CD8-positive, alpha-beta T cell (primary cell): ENCODE measurements at regions of chr14 and their contacts with region 1.

Region 1: DNA sequence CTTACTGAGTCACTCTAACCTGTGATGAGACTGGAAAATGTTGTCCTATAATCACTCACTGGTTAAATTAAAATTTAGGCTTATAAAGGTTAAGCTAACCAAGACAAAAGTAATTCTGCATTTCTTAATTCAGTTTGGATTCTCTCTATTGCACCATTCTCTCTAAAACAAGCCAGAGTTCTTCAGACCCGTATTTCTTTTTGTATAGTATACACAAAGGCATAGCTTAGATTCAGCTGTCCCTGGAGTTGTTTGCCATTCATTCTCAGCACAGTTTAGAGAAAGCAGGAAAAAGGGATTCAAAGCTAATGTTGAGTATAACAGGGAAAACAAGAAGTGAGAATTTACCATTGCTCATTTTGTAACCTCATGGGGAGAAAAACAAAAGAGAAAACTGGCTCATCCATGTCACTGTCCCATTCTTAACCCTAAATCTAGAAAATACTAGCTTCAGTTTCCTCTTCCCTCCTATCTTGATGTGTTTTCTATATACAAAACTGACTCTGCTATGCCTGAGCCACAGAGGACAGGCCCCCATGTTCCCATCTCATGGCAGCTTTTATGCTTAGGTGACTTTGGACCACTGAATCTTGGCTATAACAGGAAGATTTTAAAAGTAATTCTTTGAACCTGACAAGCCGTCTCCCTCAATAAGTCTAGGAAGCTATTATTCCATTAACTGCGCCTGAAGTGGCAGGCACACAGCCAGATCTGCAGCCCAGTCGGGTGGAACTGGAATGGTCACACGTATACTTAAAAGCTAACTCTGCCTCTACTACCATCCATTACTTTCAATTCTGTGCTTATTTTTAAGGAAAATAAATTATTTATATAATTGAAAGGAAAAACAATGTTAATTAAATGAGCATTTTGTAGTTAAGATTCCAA is 7.0 kb downstream of the AREL1 start:
- DNase-seq: no peak
- ATAC-seq: no peak
- H3K4me3 ChIP-seq: no peak overlapping the region
- H3K4me3 Mint-ChIP-seq: no peak overlapping the region
- H3K27ac ChIP-seq: no peak overlapping the region
- H3K27ac Mint-ChIP-seq: no peak overlapping the region
- H3K4me1 ChIP-seq: peaks cover 17% of the 10 kb centered on the region
- H3K4me1 Mint-ChIP-seq: peaks cover 61% of the 10 kb centered on the region
- H3K27me3 ChIP-seq: no peaks in the 10 kb centered on the region
- H3K27me3 Mint-ChIP-seq: no peaks in the 10 kb centered on the region
- CTCF ChIP-seq: no peak

Region 2: DNA sequence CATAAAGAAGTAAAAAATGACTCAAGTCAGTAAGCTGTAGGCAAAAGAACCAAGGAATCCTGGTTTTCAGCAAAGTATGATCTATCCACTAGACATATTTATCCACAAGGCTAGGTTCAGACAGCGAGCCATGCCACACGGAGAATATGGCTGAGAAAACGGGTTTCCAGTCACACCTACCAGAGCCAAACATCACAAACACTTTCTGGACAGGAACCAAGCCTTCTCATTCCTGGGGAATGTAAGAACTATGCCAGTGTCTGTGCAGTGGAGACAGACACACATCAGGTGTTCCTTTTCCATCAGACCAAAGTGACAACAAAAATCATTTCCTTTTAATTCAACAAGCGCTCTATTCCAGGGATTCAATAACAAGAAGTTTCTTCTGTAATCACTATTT is 34.1 kb before region 1 on chr14:
- CTCF ChIA-PET with region 1: no interaction called
- POLR2A ChIA-PET with region 1: no interaction called
- intact Hi-C with region 1: loop called in 1 of 2 experiments (anchors 5 kb)
- DNase-seq: no peak
- ATAC-seq: no peak
- H3K4me3 ChIP-seq: no peak overlapping the region
- H3K4me3 Mint-ChIP-seq: no peak overlapping the region
- H3K27ac ChIP-seq: no peak overlapping the region
- H3K27ac Mint-ChIP-seq: no peak overlapping the region
- H3K4me1 ChIP-seq: no peaks in the 10 kb centered on the region
- H3K4me1 Mint-ChIP-seq: no peaks in the 10 kb centered on the region
- H3K27me3 ChIP-seq: no peaks in the 10 kb centered on the region
- H3K27me3 Mint-ChIP-seq: no peaks in the 10 kb centered on the region
- CTCF ChIP-seq: no peak